Right cardiac atrium (tissue), 5 donors: ENCODE measurements at regions of chr20 and their contacts with region 1.

Region 1: DNA sequence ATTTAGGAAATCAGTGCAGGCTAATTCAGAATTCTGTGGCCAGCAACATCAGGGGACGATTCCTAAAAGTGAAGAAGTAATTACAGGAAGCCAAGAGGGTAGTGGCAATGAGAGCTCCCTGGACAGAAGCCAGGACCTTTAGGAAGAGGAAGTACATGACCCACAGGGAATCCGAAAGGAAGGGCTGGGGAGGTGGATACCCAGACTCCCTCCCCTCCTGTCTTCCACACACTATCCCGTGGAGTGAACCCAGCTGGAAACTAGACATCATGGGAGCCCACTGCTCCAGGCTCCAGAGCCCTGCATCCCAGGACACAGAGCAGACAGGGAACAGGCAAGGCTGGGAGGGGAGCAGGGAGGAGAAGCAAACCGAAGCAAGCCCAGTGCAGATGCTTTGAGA is 83.0 kb downstream of the SNX5 start:
- DNase-seq: no peak
- ATAC-seq: peak; percentile 44 to 72
- H3K4me3 ChIP-seq: no peak overlapping the region
- H3K27ac ChIP-seq: no peak overlapping the region
- H3K4me1 ChIP-seq: no peaks in the 10 kb centered on the region
- H3K27me3 ChIP-seq: no peaks in the 10 kb centered on the region

Region 2: GRCh38 chr20:17693444-17694001 is 192.0 kb before region 1 on chr20:
- intact Hi-C with region 1: loop called in 1 of 4 experiments (anchors 10 kb)
- DNase-seq: no peak
- ATAC-seq: no peak
- H3K4me3 ChIP-seq: no peak overlapping the region
- H3K27ac ChIP-seq: no peak overlapping the region
- H3K4me1 ChIP-seq: no peaks in the 10 kb centered on the region
- H3K27me3 ChIP-seq: no peaks in the 10 kb centered on the region